Panc1 (cell line): ENCODE measurements at regions of chr15 and their contacts with region 1.

Region 1: GRCh38 chr15:60390871-60391501 is 6.8 kb downstream of the ANXA2 start:
- DNase-seq: no peak
- ATAC-seq: peak; percentile 35
- H3K4me3 ChIP-seq: peak overlapping the region; percentile 57 to 88
- H3K27ac ChIP-seq: peak overlapping the region; percentile 100
- H3K4me1 ChIP-seq: peaks cover 95% of the 10 kb centered on the region
- H3K27me3 ChIP-seq: no peaks in the 10 kb centered on the region
- CTCF ChIP-seq: no peak

Region 2: GRCh38 chr15:59741274-59741906 is 649.6 kb before region 1 on chr15:
- CTCF ChIA-PET with region 1: no interaction called
- POLR2A ChIA-PET with region 1: no interaction called
- in situ Hi-C with region 1: no loop called
- intact Hi-C with region 1: no loop called
- DNase-seq: no peak
- ATAC-seq: 0 out of 2 replicates have a peak, but pooled peaks have one; percentile 77
- H3K4me3 ChIP-seq: no peak overlapping the region
- H3K27ac ChIP-seq: no peak overlapping the region
- H3K4me1 ChIP-seq: no peaks in the 10 kb centered on the region
- H3K27me3 ChIP-seq: no peaks in the 10 kb centered on the region
- CTCF ChIP-seq: peak; percentile 35; the same call in 1 of the 2 replicates

Region 3: DNA sequence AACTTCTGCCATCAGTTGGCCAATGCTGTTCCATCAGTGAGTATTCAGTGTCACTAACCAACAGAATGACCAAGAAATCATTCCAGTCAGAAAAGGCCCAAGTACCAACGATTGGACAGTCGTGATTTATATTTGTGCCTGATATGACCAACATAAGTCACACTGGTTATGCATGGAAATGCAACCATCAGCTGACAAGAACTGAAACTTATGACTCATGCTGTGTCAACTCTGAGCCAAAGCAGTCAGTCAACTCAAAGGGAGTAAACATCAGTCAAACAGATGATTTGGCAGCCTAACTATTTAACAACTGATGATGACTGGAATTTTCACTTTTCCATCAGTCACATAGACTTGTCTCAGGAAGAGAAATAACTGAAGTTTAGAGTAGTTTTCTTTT is 135.6 kb before region 1 on chr15:
- CTCF ChIA-PET with region 1: no interaction called
- POLR2A ChIA-PET with region 1: no interaction called
- in situ Hi-C with region 1: no loop called
- intact Hi-C with region 1: no loop called
- DNase-seq: peak; percentile 96
- ATAC-seq: peak; percentile 96
- H3K4me3 ChIP-seq: no peak overlapping the region
- H3K27ac ChIP-seq: no peak overlapping the region
- H3K4me1 ChIP-seq: peaks cover 7% of the 10 kb centered on the region
- H3K27me3 ChIP-seq: no peaks in the 10 kb centered on the region
- CTCF ChIP-seq: no peak

Region 4: GRCh38 chr15:60362321-60363086 is 28.5 kb before region 1 on chr15:
- CTCF ChIA-PET with region 1: no interaction called
- POLR2A ChIA-PET with region 1: interaction called, 13 read pairs
- in situ Hi-C with region 1: no loop called
- intact Hi-C with region 1: no loop called
- DNase-seq: peak; percentile 88
- ATAC-seq: peak; percentile 47
- H3K4me3 ChIP-seq: no peak overlapping the region
- H3K27ac ChIP-seq: peak overlapping the region; percentile 100
- H3K4me1 ChIP-seq: peaks cover 77% of the 10 kb centered on the region
- H3K27me3 ChIP-seq: no peaks in the 10 kb centered on the region
- CTCF ChIP-seq: no peak